Activated CD4-positive, alpha-beta memory T cell treated with anti-CD3 and anti-CD28 coated beads for 36 hours (primary cell): ENCODE measurements at regions of chr16 and their contacts with region 1.

Region 1: DNA sequence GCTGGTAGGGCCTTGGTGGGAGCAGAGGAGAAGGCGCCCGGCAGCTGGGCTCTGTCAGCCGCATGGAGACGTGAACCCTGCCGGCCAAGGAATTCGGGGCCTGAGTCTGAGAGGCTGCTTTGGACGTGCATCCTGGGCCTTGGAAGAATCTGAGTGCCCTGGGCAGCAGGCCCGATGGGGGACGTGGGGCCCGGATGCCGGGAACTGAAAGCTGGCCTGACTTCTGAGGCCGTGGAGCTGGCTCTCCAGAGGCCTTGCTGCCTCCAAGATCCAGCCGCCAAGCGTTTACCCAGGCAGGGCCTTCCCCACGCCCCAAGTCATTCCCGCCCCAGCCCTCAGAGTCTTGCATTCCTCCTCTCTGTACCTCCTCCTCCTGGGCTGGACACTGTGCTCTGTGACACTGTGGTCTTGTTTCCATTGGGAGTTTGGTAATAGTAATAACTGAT is 37.2 kb downstream of the NKD1 start:
- DNase-seq: no peak
- H3K4me3 Mint-ChIP-seq: no peak overlapping the region
- H3K27ac Mint-ChIP-seq: no peak overlapping the region
- H3K4me1 Mint-ChIP-seq: peaks cover 22% of the 10 kb centered on the region
- H3K27me3 Mint-ChIP-seq: no peaks in the 10 kb centered on the region

Region 2: DNA sequence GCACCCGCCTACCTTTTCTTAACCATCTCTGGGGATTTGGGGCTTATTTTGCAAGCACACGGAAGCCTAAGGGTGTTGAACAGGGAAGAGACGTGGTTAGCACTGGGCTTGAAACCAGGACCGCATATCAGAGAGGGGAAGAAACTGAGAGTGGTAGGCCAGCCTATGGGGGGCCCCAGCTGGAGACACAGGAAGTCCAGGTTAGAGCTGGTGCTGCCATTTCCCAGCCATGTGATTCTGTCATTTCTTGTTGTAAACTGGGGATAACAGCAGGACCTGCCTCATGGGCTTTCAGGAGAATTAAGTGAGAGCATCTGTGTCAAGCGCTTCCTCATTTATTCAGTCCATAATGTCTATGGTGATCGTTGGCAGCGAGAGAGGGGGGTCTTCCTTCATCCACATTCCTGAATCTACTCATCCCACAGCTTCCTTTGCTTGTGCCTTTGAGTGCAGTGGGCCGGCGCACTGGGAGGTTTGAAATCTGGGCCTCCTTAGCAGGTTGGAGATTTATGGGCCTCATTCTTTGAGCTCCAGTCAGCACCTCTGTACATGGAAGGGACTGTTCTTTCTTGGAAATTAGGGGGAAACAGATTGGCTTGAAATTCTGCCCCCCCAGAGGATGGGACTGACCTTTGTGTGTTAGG is 17.0 kb before region 1 on chr16:
- CTCF ChIA-PET with region 1: no interaction called
- POLR2A ChIA-PET with region 1: no interaction called
- intact Hi-C with region 1: no loop called
- DNase-seq: no peak
- H3K4me3 Mint-ChIP-seq: no peak overlapping the region
- H3K27ac Mint-ChIP-seq: no peak overlapping the region
- H3K4me1 Mint-ChIP-seq: no peaks in the 10 kb centered on the region
- H3K27me3 Mint-ChIP-seq: no peaks in the 10 kb centered on the region

Region 3: GRCh38 chr16:50627419-50627818 is 42.1 kb after region 1 on chr16:
- CTCF ChIA-PET with region 1: no interaction called
- POLR2A ChIA-PET with region 1: no interaction called
- intact Hi-C with region 1: loop called (anchors 5 kb)
- DNase-seq: peak; percentile 62
- H3K4me3 Mint-ChIP-seq: no peak overlapping the region
- H3K27ac Mint-ChIP-seq: no peak overlapping the region
- H3K4me1 Mint-ChIP-seq: peaks cover 31% of the 10 kb centered on the region
- H3K27me3 Mint-ChIP-seq: no peaks in the 10 kb centered on the region